ENCODE measurements at regions of chr22 and their contacts with region 1.

Region 1: GRCh38 chr22:31160328-31160978 is 471 bp downstream of the RNF185 start:
- DNase-seq: no peak
- H3K4me3 ChIP-seq: peak overlapping the region; percentile 82 to 85
- H3K27ac ChIP-seq: peak overlapping the region; percentile 94
- H3K4me1 ChIP-seq: peaks cover 12 to 31% of the 10 kb centered on the region in 2 donors
- H3K27me3 ChIP-seq: no peaks in the 10 kb centered on the region
- CTCF ChIP-seq: no peak

Region 2: GRCh38 chr22:31173386-31174145 is 13.1 kb after region 1 on chr22:
- intact Hi-C with region 1: loop called (anchors 1 kb)
- DNase-seq: peak in 1 of 2 donors; percentile 71
- H3K4me3 ChIP-seq: no peak overlapping the region
- H3K27ac ChIP-seq: peak overlapping the region; percentile 61 to 69
- H3K4me1 ChIP-seq: peaks cover 5 to 61% of the 10 kb centered on the region in 2 donors
- H3K27me3 ChIP-seq: no peaks in the 10 kb centered on the region
- CTCF ChIP-seq: no peak